ENCODE measurements at regions of chr2 and their contacts with region 1.

Region 1: GRCh38 chr2:178891265-178891958 is 84.2 kb upstream of the TTN start:
- DNase-seq: peak; percentile 74
- H3K4me3 ChIP-seq: no peak overlapping the region
- H3K27ac ChIP-seq: no peak overlapping the region
- H3K4me1 ChIP-seq: peaks cover 2% of the 10 kb centered on the region
- H3K27me3 ChIP-seq: no peaks in the 10 kb centered on the region
- CTCF ChIP-seq: peak; percentile 74 to 85
- POLR2A ChIP-seq: no peak

Region 2: DNA sequence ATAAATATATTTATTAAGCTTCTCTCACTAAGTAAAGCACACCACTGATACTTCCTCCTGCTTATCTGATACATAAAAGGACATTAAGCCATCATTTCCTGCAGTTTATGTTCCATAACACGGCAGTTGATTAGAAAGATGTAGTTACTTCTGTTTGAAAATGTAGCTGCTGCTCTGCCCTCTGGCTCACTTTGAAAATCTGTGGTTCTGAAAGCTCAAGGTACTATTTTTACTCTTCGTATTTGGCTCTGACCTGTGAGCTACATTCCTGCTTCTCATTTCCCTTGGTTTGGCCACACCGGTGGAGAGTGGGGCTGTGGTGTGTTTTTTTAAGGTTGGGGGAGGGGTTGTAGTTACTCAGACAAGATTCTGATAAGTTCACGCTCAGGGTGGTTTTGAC is 71.4 kb before region 1 on chr2:
- CTCF ChIA-PET with region 1: interaction called, 10 read pairs
- POLR2A ChIA-PET with region 1: no interaction called
- dilution Hi-C with region 1: no loop called
- intact Hi-C with region 1: no loop called
- DNase-seq: peak; percentile 63
- H3K4me3 ChIP-seq: peak overlapping the region in 2 of 3 experiments; percentile 27 to 66
- H3K27ac ChIP-seq: peak overlapping the region; percentile 80
- H3K4me1 ChIP-seq: peaks cover 21% of the 10 kb centered on the region
- H3K27me3 ChIP-seq: no peaks in the 10 kb centered on the region
- CTCF ChIP-seq: no peak
- POLR2A ChIP-seq: no peak

Region 3: GRCh38 chr2:178874529-178875240 is 16.7 kb before region 1 on chr2:
- CTCF ChIA-PET with region 1: interaction called, 45 read pairs
- POLR2A ChIA-PET with region 1: no interaction called
- dilution Hi-C with region 1: no loop called
- intact Hi-C with region 1: no loop called
- DNase-seq: no peak
- H3K4me3 ChIP-seq: no peak overlapping the region
- H3K27ac ChIP-seq: no peak overlapping the region
- H3K4me1 ChIP-seq: peaks cover 13% of the 10 kb centered on the region
- H3K27me3 ChIP-seq: no peaks in the 10 kb centered on the region
- CTCF ChIP-seq: no peak
- POLR2A ChIP-seq: no peak

Region 4: DNA sequence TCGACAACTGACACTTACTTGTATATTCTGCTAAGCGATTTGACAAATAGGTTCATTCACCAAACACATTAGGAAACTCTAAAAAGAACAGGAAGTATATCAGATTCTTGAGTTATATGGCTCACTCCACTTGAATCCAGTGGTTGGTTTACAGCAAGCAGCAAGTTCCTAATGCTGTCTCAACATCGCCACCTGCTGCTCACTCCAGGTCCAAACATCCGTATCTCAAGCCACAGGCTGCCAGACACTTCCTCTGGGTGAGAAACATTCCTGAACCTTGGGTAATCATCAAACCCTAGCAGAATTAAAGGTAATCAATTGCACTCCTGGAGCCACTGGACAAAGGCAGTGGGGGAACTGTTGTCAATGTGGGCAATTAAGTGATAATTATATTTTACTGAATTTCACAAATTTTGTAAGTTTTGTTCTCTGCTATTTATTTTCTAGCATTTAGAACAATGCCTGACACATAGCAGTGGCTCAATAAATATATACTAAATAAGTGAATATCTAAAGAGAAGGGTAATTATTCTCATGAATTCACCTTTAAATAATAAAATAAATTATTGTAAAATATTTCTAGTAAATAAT is 22.9 kb after region 1 on chr2:
- CTCF ChIA-PET with region 1: interaction called, 27 read pairs
- POLR2A ChIA-PET with region 1: no interaction called
- dilution Hi-C with region 1: no loop called
- intact Hi-C with region 1: loop called (anchors 1 kb)
- DNase-seq: peak; percentile 88
- H3K4me3 ChIP-seq: no peak overlapping the region
- H3K27ac ChIP-seq: no peak overlapping the region
- H3K4me1 ChIP-seq: peaks cover 2% of the 10 kb centered on the region
- H3K27me3 ChIP-seq: peaks cover 0 to 10% of the 10 kb centered on the region in 2 experiments
- CTCF ChIP-seq: peak; percentile 79 to 88
- POLR2A ChIP-seq: no peak

Measured in endothelial cell of umbilical vein (primary cell).